HepG2 (cell line): ENCODE measurements at regions of chr17 and their contacts with region 1.

Region 1: GRCh38 chr17:43217614-43218087 is 6.0 kb downstream of the TMEM106A start:
- DNase-seq: no peak
- ATAC-seq: peak; percentile 3; the same call in 2 of the 3 replicates
- H3K4me3 ChIP-seq: no peak overlapping the region
- H3K27ac ChIP-seq: peak overlapping the region; percentile 94
- H3K4me1 ChIP-seq: peaks cover 70% of the 10 kb centered on the region
- H3K27me3 ChIP-seq: no peaks in the 10 kb centered on the region
- CTCF ChIP-seq: no peak
- EP300 ChIP-seq: no peak
- POLR2A ChIP-seq: no peak; a peak in 1 of 4 replicates
- RAD21 ChIP-seq: no peak

Region 2: DNA sequence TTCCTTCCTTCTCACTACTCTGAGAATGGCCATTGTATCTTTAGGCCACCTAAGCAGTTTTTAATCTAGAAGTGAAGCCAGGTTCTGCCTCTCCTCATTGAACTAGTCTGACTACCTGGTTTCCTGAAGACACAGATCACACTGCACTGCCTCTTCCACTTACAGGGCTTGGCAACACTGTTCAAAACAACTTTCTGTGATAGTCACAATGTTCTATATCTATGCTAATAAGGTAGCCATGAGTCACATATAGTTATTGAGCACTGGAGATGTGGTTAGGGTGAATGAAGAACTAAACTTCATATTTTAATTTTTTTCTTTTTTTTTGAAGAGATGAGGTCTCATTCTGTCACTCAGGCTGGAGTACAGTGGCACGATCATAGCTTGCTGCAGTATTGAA is 165.7 kb before region 1 on chr17:
- CTCF ChIA-PET with region 1: no interaction called
- POLR2A ChIA-PET with region 1: no interaction called
- in situ Hi-C with region 1: no loop called
- intact Hi-C with region 1: no loop called
- DNase-seq: no peak
- ATAC-seq: no peak
- H3K4me3 ChIP-seq: no peak overlapping the region
- H3K27ac ChIP-seq: no peak overlapping the region
- H3K4me1 ChIP-seq: no peaks in the 10 kb centered on the region
- H3K27me3 ChIP-seq: no peaks in the 10 kb centered on the region
- CTCF ChIP-seq: no peak
- EP300 ChIP-seq: no peak
- POLR2A ChIP-seq: no peak
- RAD21 ChIP-seq: no peak

Region 3: DNA sequence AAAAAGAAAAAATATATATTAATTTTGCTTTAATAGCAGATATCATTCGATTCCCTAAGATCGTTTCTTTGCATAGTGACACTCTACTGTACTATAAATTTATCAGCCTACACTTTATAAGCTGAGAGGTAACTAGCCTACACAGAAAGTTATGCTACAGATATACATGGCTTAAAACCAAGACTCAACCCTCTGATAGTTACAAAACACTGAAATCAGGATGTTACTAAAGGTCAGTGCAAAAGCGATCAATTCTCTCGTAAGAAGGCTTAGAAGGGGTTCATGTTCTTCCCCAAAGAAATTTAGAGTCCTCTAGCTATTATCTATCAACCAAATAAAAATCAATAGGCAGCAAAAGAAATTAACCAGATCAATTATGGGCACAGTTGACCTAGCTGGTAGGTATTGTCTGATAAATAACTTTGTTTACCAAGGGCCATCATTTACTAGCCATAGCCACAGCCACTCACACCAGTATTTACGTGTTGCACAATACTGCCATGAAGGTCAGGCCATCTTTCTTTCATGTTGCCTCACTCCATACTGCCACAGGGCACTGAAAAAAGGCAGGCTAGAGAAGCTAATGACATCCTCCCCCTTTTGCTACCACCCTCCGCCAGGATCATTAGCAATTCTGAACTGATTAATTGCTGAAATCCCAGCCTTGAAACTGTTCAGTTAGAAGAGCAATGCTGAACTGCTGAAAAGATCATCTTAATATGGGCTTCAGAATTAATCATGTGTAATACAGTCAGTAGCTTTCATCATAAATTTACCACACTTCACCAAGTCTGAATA is 148.9 kb before region 1 on chr17:
- CTCF ChIA-PET with region 1: no interaction called
- POLR2A ChIA-PET with region 1: interaction called, 11 read pairs
- in situ Hi-C with region 1: no loop called
- intact Hi-C with region 1: no loop called
- DNase-seq: peak; percentile 90
- ATAC-seq: peak; percentile 99
- H3K4me3 ChIP-seq: peak overlapping the region in 2 of 3 experiments; percentile 19 to 21; a peak in 2 of 6 replicates
- H3K27ac ChIP-seq: peak overlapping the region; percentile 79
- H3K4me1 ChIP-seq: peaks cover 22% of the 10 kb centered on the region
- H3K27me3 ChIP-seq: no peaks in the 10 kb centered on the region
- CTCF ChIP-seq: peak; percentile 36
- EP300 ChIP-seq: peak; percentile 86 to 97
- POLR2A ChIP-seq: 0 out of 4 replicates have a peak, but pooled peaks of 1 of the 2 experiments have one; percentile 16
- RAD21 ChIP-seq: 0 out of 2 replicates have a peak, but pooled peaks have one; percentile 24

Region 4: GRCh38 chr17:43125133-43125966 is 92.3 kb before region 1 on chr17 and contains the start of gene BRCA1:
- CTCF ChIA-PET with region 1: no interaction called
- POLR2A ChIA-PET with region 1: interaction called, 22 read pairs
- in situ Hi-C with region 1: no loop called
- intact Hi-C with region 1: no loop called
- DNase-seq: peak; percentile 100
- ATAC-seq: peak; percentile 91
- H3K4me3 ChIP-seq: peak within 1 kb of the TSS; percentile 87 to 94 (median 91)
- H3K27ac ChIP-seq: peak within 1 kb of the TSS; percentile 95
- H3K4me1 ChIP-seq: peaks cover 53% of the 10 kb centered on the region
- H3K27me3 ChIP-seq: no peaks in the 10 kb centered on the region; a peak in 1 of 5 replicates
- CTCF ChIP-seq: peak; percentile 23; the same call in 1 of the 2 replicates
- EP300 ChIP-seq: peak; percentile 45 to 73; a peak in 2 of 4 replicates
- POLR2A ChIP-seq: peak; percentile 76 to 97
- RAD21 ChIP-seq: peak; percentile 55; the same call in 1 of the 2 replicates
- total RNA-seq, gene BRCA1: 37.5 and 56.0 TPM in 2 replicates

Region 5: DNA sequence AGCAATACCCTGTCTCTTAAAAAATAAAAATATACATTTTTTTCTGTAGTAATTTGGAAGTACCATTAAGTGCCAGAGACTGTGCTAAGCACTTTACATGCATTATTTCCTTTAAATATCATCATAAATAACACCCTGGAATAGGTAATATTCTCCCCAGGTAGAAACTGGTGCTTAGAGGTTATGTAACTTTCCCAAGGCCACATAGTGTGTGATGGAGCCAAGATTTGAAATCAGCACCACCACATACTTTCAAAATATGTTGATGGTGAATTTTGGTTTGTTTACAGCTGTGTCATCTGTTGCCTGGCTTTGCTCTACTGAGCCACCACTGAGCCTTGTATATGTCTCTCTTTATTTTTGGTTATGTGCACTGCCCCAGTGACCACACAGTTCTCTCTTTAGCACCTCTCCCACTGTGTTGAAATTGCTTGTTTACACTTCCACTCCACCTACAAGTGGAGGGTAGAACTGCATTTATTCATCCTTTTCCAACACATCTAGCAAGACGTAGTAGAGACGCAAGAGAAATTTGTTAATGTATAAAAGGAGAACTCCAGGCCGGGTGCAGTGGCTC is 65.7 kb before region 1 on chr17:
- CTCF ChIA-PET with region 1: no interaction called
- POLR2A ChIA-PET with region 1: no interaction called
- in situ Hi-C with region 1: no loop called
- intact Hi-C with region 1: no loop called
- DNase-seq: no peak
- ATAC-seq: peak; percentile 62
- H3K4me3 ChIP-seq: no peak overlapping the region
- H3K27ac ChIP-seq: no peak overlapping the region
- H3K4me1 ChIP-seq: peaks cover 44% of the 10 kb centered on the region
- H3K27me3 ChIP-seq: no peaks in the 10 kb centered on the region
- CTCF ChIP-seq: no peak
- EP300 ChIP-seq: no peak
- POLR2A ChIP-seq: no peak
- RAD21 ChIP-seq: no peak

Region 6: DNA sequence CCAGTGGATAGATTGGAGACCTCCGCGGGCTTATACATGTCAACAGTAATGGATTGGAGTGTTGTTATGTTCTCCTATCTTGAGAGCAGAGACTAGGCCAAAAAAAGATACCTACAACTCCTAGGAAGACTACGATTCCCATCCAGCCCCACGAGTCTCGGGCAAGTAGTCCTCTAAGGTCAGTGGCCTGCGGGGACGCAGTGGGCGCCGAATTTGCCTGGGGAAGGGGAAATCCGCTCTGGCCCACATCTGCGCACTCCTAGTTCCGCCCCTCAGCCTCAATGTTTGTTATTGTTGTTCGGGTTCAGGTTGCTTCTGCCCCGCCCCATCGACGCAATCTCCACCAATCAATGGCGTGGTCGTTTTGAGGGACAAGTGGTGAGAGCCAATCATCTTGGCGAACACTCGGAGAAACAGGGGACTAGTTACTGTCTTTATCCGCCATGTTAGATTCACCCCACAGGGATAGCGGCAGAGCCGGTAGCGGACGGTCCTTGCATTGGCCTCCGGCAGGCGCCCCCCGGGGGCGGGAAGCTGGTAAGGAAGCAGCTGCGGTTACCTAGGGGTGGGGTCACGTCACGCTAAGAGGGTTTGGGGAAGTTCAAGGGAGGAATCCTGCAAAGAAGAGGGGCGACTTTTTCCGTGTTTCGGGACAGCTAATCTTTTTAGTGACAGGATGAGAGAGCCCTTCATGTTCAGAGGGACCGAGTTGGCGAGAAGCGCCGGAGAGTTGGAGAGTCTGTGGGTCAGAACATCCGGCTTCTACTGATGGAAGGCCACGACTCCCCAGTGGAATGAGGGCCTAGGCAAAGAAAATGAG is 46.7 kb before region 1 on chr17 and contains the start of gene NBR1:
- CTCF ChIA-PET with region 1: no interaction called
- POLR2A ChIA-PET with region 1: interaction called, 93 read pairs
- in situ Hi-C with region 1: no loop called
- intact Hi-C with region 1: loop called (anchors 2 kb)
- DNase-seq: peak; percentile 99
- ATAC-seq: peak; percentile 90
- H3K4me3 ChIP-seq: peak within 1 kb of the TSS; percentile 62 to 94 (median 75)
- H3K27ac ChIP-seq: peak within 1 kb of the TSS; percentile 90
- H3K4me1 ChIP-seq: peaks cover 69% of the 10 kb centered on the region
- H3K27me3 ChIP-seq: no peaks in the 10 kb centered on the region; a peak in 1 of 5 replicates
- CTCF ChIP-seq: peak; percentile 79
- EP300 ChIP-seq: peak in 1 of 2 experiments; percentile 43; a peak in 2 of 4 replicates
- POLR2A ChIP-seq: peak; percentile 76 to 89
- RAD21 ChIP-seq: peak; percentile 68
- total RNA-seq, gene NBR1: 51.7 and 79.0 TPM in 2 replicates

Region 7: GRCh38 chr17:43753493-43754129 is 536.0 kb after region 1 on chr17:
- CTCF ChIA-PET with region 1: no interaction called
- POLR2A ChIA-PET with region 1: no interaction called
- in situ Hi-C with region 1: no loop called
- intact Hi-C with region 1: no loop called
- DNase-seq: no peak
- ATAC-seq: no peak
- H3K4me3 ChIP-seq: no peak overlapping the region
- H3K27ac ChIP-seq: no peak overlapping the region
- H3K4me1 ChIP-seq: peaks cover 12% of the 10 kb centered on the region
- H3K27me3 ChIP-seq: peaks cover 16 to 75% of the 10 kb centered on the region in 2 experiments
- CTCF ChIP-seq: no peak
- EP300 ChIP-seq: no peak
- POLR2A ChIP-seq: no peak
- RAD21 ChIP-seq: no peak